ENCODE measurements at regions of chr7 and their contacts with region 1.

Region 1: DNA sequence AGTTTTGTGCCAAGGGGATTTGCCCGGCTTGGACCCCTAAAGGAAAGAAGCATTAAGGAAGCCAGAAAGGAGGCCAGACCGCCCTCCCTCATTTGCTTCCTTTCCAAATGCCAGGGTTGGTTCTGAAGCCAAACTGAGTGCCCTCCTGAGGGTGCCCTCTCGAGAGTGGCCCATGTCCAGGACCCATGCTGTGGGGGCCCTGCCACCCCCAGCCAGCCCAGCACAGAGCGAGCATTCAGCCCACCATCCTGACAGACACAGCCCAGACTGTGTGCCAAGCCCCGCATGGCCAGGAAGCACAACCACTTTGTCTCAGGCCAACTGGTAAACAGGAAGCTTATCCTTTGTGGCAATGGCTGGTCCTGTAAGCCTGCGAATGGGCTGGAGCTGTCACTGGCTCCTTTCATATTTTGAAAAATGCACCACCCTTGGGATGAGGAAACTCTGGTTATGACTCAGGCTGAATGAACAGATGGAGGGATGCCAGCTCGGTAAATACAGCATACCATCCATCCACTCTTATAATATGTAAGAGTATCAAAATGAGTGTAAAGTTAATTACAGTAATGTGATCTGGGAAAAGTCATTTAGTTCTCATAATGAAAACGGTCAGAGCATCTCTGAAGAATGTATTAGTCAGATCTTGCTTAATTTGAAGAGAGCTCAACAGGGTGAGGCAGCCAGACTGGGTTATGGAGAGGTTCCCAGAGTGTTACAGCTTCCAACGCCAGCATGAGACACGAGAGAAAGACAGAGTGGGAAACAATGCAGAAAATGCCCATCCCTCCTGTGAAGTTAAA is 65.0 kb downstream of the STK17A start:
- DNase-seq: peak; percentile 69
- ATAC-seq: peak; percentile 29
- H3K4me3 Mint-ChIP-seq: peak overlapping the region; percentile 76
- H3K27ac Mint-ChIP-seq: peak overlapping the region; percentile 97
- H3K4me1 Mint-ChIP-seq: peaks cover 95% of the 10 kb centered on the region
- H3K27me3 Mint-ChIP-seq: no peaks in the 10 kb centered on the region

Region 2: GRCh38 chr7:43572516-43573049 is 75.3 kb before region 1 on chr7:
- CTCF ChIA-PET with region 1: interaction called, 10 read pairs
- DNase-seq: peak; percentile 81
- ATAC-seq: peak; percentile 89
- H3K4me3 Mint-ChIP-seq: no peak overlapping the region
- H3K27ac Mint-ChIP-seq: peak overlapping the region; percentile 71
- H3K4me1 Mint-ChIP-seq: peaks cover 53% of the 10 kb centered on the region
- H3K27me3 Mint-ChIP-seq: no peaks in the 10 kb centered on the region

Region 3: DNA sequence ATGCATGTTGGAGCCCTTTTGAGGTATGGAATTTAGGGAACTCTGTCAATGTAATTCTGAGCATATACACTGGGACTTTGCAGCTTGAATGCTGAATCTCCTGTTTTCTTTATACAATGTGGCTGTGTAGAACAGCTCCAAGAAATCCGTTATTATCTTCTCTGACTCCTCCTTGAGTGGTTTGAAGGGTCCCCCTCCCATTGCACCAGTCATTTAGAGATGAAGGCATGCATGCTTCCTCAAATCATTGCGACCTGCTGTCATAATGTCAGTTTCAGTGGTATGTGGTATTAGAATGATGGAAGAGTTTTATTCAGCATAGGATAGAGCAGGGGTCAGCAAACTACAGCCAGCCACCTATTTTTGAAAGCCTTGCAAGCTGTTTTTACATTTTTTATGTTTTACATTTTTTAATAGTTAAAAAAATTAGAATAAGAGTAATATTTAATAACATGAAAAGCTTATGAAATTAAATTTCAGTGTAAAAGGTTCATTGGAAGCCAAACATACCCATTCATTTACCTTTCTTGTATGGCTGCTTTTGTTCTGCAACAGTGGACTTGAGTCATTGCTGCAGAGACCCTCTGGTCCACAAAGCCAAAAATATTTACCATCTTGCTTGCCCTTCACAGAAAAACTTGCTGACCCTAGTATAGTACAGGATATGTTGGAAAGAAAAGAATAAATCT is 56.9 kb before region 1 on chr7:
- CTCF ChIA-PET with region 1: interaction called, 10 read pairs
- DNase-seq: peak; percentile 79
- ATAC-seq: peak; percentile 59
- H3K4me3 Mint-ChIP-seq: peak overlapping the region; percentile 49
- H3K27ac Mint-ChIP-seq: peak overlapping the region; percentile 74
- H3K4me1 Mint-ChIP-seq: peaks cover 81% of the 10 kb centered on the region
- H3K27me3 Mint-ChIP-seq: no peaks in the 10 kb centered on the region